Spleen (tissue), 13 donors: ENCODE measurements at regions of chr3 and their contacts with region 1.

Region 1: DNA sequence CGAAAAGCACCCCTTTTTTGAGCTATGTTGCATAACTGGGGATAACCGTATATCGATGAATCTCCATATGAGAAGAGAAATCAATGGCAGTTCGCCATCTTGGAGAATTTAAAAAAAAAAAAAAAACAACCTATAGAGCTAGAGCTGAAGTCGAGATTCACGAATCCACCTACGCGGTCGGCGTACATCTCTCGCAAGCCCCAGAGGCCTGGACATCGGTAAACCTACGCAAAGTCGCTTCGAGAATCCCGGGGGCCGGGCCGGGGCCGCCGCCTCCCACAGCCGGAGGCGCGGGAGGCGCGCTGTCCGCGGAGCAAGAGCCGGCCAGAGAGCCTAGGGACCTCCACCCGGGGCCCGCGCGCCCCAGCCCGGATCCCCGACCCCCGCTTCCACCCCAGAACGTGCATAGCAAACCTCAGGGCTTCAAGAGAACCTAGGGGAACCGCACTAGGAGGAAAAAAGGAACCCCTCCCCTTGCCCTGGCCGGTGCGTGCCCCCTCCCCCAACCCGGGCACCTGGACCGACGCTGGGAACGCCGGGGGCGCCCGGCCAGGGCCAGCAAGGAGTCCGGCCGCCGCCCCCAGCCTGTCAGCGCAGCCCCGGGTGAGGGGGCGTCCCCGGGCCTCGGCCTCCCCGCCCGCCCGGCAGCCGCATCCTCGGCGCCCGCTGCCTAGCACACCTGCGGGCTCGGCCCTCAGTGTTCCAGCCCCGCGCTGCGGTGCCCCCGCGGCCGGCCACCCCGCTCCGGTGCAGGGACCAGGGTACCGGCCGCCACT is 567 bp downstream of the PFN2 start:
- DNase-seq: peak; percentile 94
- H3K4me3 ChIP-seq: peak overlapping the region; percentile 73 to 96 (median 86)
- H3K27ac ChIP-seq: peak overlapping the region; percentile 1 to 87 (median 82)
- H3K4me1 ChIP-seq: peaks cover 0 to 49% (median 27%) of the 10 kb centered on the region in 6 donors
- H3K27me3 ChIP-seq: peaks cover 0 to 52% (median 7%) of the 10 kb centered on the region in 7 donors
- CTCF ChIP-seq: no peak
- POLR2A ChIP-seq: peak in 1 of 3 donors; percentile 19

Region 2: DNA sequence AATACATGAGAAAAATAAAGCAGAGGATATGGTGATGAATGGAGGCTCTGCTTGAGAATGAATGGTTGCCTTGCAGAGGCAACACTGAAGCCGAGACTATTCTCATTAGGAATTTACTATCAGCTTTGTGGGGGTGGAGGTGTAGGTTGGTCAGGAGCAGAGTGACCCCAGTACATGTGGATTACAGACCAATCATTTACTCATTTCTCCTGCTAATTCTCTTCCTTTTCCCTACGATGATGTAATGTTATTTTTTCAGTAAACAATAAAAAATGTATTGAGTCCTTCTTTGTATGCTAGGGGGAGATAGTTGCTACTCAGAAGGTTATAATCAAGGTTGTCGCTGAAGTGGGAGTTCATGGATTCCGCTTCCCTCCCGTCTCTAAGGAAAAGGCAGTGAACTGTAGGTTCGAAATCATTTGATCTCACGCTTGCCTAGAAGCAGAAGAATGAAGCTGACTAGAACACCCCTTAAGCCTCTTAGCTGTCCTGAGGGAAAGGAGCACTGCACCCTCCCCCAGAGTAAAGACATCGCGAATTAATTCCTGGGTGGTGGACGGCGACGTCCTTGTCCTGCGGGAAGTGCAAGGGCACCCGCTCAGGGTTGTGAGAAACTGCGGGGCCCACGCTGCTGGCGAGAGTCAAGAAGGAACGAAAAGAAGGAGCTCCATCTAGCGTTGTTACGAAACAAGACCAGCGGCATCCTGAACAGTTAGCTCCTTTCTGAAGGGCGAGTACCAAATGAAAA is 213.7 kb after region 1 on chr3:
- intact Hi-C with region 1: loop called (anchors 10 kb)
- DNase-seq: peak; percentile 80
- H3K4me3 ChIP-seq: peak overlapping the region in 4 of 8 donors; percentile 13 to 49 (median 24)
- H3K27ac ChIP-seq: peak overlapping the region in 3 of 8 donors; percentile 17 to 39 (median 26)
- H3K4me1 ChIP-seq: peaks cover 2 to 14% (median 7%) of the 10 kb centered on the region in 6 donors
- H3K27me3 ChIP-seq: peaks cover 0 to 7% (median 0%) of the 10 kb centered on the region in 7 donors
- CTCF ChIP-seq: peak in 9 of 11 experiments; percentile 28 to 66 (median 45)
- POLR2A ChIP-seq: no peak